Heart left ventricle (tissue), 16 donors: ENCODE measurements at regions of chrX and their contacts with region 1.

Region 1: DNA sequence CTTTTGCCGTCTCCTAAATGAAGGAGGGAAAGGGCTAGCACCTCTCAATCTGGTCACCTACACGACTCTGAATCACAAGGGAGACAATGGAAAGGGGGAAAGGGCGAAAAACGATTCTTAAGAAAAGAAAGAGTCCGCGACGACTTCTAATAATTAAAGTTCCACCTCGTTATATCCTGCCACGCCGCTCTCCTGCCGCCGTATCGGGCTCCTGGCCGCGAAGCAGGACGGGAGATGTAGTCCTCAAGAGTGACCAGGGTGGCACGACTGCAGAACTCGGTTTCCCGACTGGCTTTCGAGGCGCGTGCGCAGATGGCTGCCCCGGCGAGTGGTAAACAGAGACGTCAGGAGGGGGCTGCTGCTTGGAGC is at the start of gene FOXO4:
- DNase-seq: peak; percentile 91 to 95 (median 91)
- ATAC-seq: peak; percentile 96 to 98 (median 97)
- H3K4me3 ChIP-seq: peak within 1 kb of the TSS; percentile 33 to 86 (median 62)
- H3K27ac ChIP-seq: peak within 1 kb of the TSS; percentile 19 to 80 (median 60)
- H3K4me1 ChIP-seq: peaks cover 0 to 19% (median 5%) of the 10 kb centered on the region in 12 donors
- H3K27me3 ChIP-seq: peaks cover 0 to 6% (median 0%) of the 10 kb centered on the region in 9 donors
- CTCF ChIP-seq: no peak
- POLR2A ChIP-seq: peak in 1 of 2 donors; percentile 34
- total RNA-seq, gene FOXO4: 24.5 to 48.7 (median 37.0) TPM

Region 2: DNA sequence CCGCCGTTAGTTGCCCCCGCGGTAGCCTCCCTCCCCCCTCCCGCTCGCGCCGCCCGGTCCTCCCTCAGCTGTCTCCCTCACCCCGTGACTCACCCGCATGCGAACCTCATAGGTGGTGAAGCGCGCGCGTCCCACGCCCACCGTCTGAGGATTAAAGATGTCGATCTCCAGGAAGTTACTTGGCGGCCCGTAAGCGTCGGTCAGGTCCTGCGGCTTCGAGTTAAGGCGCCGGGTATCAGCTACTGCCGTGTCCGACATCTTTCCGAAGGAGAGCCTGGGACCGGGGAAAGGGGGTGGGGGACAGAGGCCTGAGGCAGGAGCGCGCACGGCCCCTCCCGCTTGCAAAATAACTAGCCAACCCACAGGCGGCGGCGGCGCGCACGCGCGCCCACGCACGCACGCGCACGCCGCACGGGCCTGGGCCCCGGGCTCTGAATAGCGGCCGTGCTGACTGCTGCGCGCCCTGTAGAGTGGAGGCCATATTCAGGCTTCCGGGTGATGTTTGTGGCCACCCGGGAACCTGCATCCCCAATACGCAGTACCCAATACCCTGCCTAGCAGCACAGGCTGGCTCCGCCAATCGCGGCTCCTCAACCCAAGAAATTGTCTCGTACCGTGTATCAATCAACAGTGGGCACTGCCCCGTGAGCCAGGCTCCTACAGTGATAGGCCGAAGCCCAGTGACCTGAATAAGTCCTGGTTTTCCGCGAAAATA is 27.3 kb before region 1 on chrX and contains the start of gene SNX12:
- intact Hi-C with region 1: loop called in 1 of 10 experiments (anchors 2 kb)
- DNase-seq: peak; percentile 91 to 94 (median 91)
- ATAC-seq: peak; percentile 97 to 99 (median 98)
- H3K4me3 ChIP-seq: peak within 1 kb of the TSS; percentile 37 to 92 (median 66)
- H3K27ac ChIP-seq: peak within 1 kb of the TSS; percentile 61 to 88 (median 83)
- H3K4me1 ChIP-seq: peaks cover 0 to 19% (median 2%) of the 10 kb centered on the region in 12 donors
- H3K27me3 ChIP-seq: no peaks in the 10 kb centered on the region
- CTCF ChIP-seq: no peak
- POLR2A ChIP-seq: peak in 1 of 2 donors; percentile 77
- total RNA-seq, gene SNX12: 40.2 to 62.5 (median 47.7) TPM

Region 3: GRCh38 chrX:71128915-71129765 is 33.6 kb after region 1 on chrX:
- intact Hi-C with region 1: loop called in 2 of 10 experiments (anchors 1 to 5 kb)
- DNase-seq: peak; percentile 50 to 76 (median 61)
- ATAC-seq: peak in 3 of 4 donors; percentile 68 to 81 (median 74)
- H3K4me3 ChIP-seq: no peak overlapping the region
- H3K27ac ChIP-seq: no peak overlapping the region
- H3K4me1 ChIP-seq: no peaks in the 10 kb centered on the region
- H3K27me3 ChIP-seq: no peaks in the 10 kb centered on the region
- CTCF ChIP-seq: peak; percentile 55 to 73 (median 62)
- POLR2A ChIP-seq: no peak